Gastrocnemius medialis (tissue), 4 donors: ENCODE measurements at regions of chr4 and their contacts with region 1.

Region 1: GRCh38 chr4:4488405-4489404 is 53.1 kb downstream of the STX18 start:
- DNase-seq: peak in 1 of 2 donors; percentile 51
- ATAC-seq: peak; percentile 66 to 89
- H3K4me3 ChIP-seq: no peak overlapping the region
- H3K27ac ChIP-seq: no peak overlapping the region
- H3K4me1 ChIP-seq: peaks cover 0 to 3% of the 10 kb centered on the region in 2 donors
- H3K27me3 ChIP-seq: no peaks in the 10 kb centered on the region
- CTCF ChIP-seq: peak; percentile 49 to 87 (median 69)
- POLR2A ChIP-seq: no peak

Region 2: DNA sequence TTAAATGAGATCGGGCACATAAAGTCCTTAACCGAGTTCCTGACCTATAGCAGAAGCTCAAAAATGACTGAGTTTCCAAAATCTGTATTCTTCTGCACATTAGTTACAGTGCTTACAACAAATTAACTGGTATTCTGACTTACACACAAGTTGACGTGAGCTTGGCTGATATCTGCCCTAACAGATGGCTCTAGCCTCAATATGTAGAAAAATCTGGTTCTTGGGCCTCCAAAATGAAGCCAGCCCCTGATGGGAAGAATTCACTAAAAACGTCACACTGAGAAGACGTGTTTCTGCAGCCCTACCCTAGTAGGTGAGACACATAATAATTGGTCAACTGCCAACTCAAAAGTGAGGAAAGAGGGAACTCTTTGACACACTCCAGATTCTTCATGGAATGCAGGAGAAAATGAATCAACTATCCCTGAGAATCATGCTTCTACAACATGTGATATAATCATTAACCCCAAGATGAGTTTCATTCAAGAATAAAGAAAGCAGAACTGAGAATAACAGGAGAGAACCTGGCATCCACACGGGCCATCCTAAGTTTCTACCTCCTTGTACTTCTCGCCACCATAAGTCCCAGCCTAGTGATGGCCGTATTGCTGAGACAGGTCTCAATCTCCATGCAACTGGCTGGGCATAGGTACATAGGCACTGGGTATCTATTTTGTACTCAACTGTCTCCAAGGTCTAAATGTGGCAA is 44.9 kb after region 1 on chr4:
- in situ Hi-C with region 1: no loop called
- intact Hi-C with region 1: loop called (anchors 2 kb)
- DNase-seq: no peak
- ATAC-seq: no peak
- H3K4me3 ChIP-seq: no peak overlapping the region
- H3K27ac ChIP-seq: no peak overlapping the region
- H3K4me1 ChIP-seq: no peaks in the 10 kb centered on the region
- H3K27me3 ChIP-seq: no peaks in the 10 kb centered on the region
- CTCF ChIP-seq: no peak
- POLR2A ChIP-seq: no peak

Region 3: GRCh38 chr4:4575273-4576211 is 86.8 kb after region 1 on chr4:
- in situ Hi-C with region 1: no loop called
- intact Hi-C with region 1: loop called (anchors 1 kb)
- DNase-seq: peak; percentile 12 to 18
- ATAC-seq: peak; percentile 74 to 76
- H3K4me3 ChIP-seq: peak overlapping the region; percentile 60 to 78 (median 64)
- H3K27ac ChIP-seq: peak overlapping the region; percentile 7 to 66 (median 9)
- H3K4me1 ChIP-seq: no peaks in the 10 kb centered on the region
- H3K27me3 ChIP-seq: no peaks in the 10 kb centered on the region
- CTCF ChIP-seq: peak in 4 of 5 experiments; percentile 27 to 67 (median 52)
- POLR2A ChIP-seq: no peak

Region 4: DNA sequence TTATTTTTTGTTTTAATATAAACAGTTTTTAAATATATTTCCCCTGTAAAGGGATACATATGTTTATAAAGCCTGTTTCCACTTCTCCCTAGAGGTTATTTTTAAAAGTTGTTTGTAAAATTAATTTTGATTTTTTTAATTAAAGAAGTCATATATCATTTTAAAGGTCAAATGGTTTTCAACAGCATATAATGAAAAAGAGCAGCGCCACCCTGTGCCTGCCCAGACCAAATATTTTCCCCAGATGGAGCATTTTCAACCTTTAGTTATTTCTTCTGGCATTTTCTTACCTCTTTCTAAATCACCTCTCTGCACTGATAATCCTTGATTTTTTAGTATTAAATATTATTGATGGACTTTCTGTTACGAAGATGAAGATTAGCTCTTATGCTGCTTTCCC is 391.8 kb after region 1 on chr4:
- in situ Hi-C with region 1: loop called in 1 of 4 experiments (anchors 25 kb)
- intact Hi-C with region 1: no loop called
- DNase-seq: no peak
- ATAC-seq: no peak
- H3K4me3 ChIP-seq: no peak overlapping the region
- H3K27ac ChIP-seq: no peak overlapping the region
- H3K4me1 ChIP-seq: no peaks in the 10 kb centered on the region
- H3K27me3 ChIP-seq: peaks cover 9 to 14% (median 12%) of the 10 kb centered on the region in 3 donors
- CTCF ChIP-seq: peak in 1 of 5 experiments; percentile 29
- POLR2A ChIP-seq: no peak

Region 5: DNA sequence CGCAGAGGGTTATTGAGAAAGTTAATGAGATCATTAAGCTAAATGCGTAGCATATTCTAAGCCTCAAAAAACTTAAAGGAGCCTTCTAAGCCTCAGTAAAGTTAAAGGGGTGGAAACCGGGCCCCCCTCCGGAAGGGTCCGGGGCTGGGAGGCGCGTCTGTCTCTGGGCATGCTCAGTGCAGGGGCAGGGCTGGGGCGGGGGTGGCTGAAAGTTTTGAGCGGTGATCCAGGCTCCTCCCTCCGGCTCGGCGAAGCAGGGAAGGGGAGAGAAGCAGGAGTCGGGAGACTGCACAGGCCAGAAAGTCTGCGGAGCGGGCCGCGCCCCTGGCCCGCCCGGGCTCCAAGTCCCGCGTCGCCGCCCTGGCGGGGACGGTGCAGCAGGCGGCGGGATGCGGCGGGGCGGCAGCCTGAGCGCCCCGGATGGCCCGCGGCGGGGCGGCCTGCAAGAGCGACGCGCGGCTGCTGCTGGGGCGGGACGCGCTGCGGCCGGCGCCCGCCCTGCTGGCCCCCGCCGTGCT is 1222.3 kb after region 1 on chr4 and contains the start of gene EVC:
- in situ Hi-C with region 1: no loop called
- intact Hi-C with region 1: no loop called
- DNase-seq: peak; percentile 42 to 43
- ATAC-seq: peak; percentile 58 to 64
- H3K4me3 ChIP-seq: peak within 1 kb of the TSS; percentile 39 to 47 (median 43)
- H3K27ac ChIP-seq: peak within 1 kb of the TSS; percentile 32 to 67 (median 54)
- H3K4me1 ChIP-seq: no peaks in the 10 kb centered on the region
- H3K27me3 ChIP-seq: peaks cover 8 to 23% (median 16%) of the 10 kb centered on the region in 3 donors
- CTCF ChIP-seq: no peak
- POLR2A ChIP-seq: peak; percentile 24 to 35
- total RNA-seq, gene EVC: 1.5 to 9.8 (median 2.0) TPM

Region 6: DNA sequence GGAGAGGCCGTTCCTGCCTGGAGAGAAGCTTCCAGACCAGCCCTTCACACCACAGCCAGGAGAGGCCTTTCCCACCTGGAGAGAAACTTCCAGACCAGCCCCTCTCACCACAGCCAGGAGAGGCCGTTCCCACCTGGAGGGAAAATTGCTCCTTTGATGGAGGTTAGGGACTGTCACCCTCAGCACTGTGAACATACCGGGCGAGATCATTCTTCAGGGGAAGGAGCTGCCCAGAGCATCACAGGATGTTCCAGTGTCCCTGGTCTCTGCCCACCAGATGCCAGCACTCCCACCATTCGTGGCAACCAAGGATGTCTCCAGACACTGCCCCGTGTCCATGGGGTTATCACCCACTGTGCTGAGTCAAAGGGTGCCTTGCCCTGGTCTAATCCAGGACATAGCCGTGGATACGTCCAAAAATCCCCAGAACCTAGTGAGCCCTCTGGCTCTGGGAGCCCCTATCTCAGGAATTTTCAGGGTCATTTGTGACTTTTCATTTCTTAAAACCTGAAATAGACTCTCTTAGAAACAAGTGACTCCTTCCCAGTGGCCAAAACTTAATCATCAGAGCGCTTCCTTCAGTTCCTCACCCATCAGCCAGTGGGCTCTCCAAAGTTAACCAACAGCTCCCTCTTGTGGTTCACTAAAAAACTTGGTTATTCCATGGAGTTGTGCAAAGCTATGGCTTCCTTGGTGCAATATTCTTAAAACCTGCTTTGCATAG is 1324.0 kb after region 1 on chr4:
- in situ Hi-C with region 1: loop called in 1 of 4 experiments (anchors 25 kb)
- intact Hi-C with region 1: no loop called
- DNase-seq: no peak
- ATAC-seq: no peak
- H3K4me3 ChIP-seq: no peak overlapping the region
- H3K27ac ChIP-seq: no peak overlapping the region
- H3K4me1 ChIP-seq: no peaks in the 10 kb centered on the region
- H3K27me3 ChIP-seq: no peaks in the 10 kb centered on the region
- CTCF ChIP-seq: peak in 4 of 5 experiments; percentile 18 to 48 (median 40)
- POLR2A ChIP-seq: no peak